Mammary epithelial cell (primary cell): ENCODE measurements at regions of chr16 and their contacts with region 1.

Region 1: GRCh38 chr16:56988948-56989945 is at the start of gene NLRC5:
- DNase-seq: peak; percentile 79
- H3K4me3 ChIP-seq: peak within 1 kb of the TSS; percentile 72 to 88 (median 75)
- H3K27ac ChIP-seq: peak within 1 kb of the TSS; percentile 21
- H3K4me1 ChIP-seq: peaks cover 27% of the 10 kb centered on the region
- H3K27me3 ChIP-seq: no peaks in the 10 kb centered on the region
- CTCF ChIP-seq: no peak
- total RNA-seq, gene NLRC5: 2.7 to 10.2 TPM

Region 2: DNA sequence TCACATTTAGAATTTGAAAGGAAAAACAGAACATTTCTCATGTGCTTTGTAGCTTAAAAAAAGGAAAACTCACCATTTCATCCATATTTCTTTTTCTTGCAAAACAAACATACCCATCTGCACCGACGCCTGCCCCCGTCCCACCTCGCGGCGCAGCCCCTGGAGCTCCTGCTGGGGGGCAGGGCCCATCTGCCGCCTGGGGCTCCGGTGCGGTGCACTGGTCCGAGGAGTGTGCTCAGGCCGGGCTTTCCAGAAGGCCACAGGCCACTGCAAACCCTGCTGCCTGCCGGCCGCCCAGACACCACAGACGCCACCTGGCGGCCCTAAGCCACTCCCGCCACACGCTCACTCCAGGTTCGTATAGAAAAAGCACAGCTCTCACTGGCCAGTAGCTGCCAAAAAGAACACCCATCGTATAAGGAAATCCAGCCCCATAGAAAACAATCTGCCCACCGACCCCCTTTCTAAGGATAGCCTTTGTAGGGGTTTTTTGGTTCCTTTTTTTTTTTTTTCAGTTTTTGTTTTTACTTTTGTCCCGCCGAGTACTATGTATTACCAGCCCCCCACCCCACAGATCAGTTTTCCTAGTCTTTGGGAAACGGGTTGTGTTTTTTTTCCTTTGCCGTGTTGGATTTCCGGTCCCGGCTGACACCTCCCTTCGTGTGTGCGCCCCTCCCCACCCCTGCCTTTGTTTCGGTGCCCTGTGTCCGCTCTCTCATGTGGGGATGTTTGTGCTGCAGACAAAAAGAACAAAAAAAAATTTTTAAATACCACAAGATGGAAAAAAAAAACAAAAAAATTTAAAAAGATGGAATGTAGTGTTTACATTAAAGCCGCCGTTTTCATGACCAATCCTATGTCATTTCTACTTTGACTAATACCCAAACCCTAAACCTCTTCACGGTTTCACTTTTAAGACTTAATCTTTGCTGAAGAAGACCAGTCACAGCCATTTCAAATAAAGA is 632.7 kb before region 1 on chr16:
- CTCF ChIA-PET with region 1: no interaction called
- dilution Hi-C with region 1: no loop called
- in situ Hi-C with region 1: no loop called
- intact Hi-C with region 1: loop called (anchors 5 kb)
- DNase-seq: peak; percentile 67
- H3K4me3 ChIP-seq: peak overlapping the region; percentile 34 to 68 (median 46)
- H3K27ac ChIP-seq: peak overlapping the region; percentile 26
- H3K4me1 ChIP-seq: peaks cover 11% of the 10 kb centered on the region
- H3K27me3 ChIP-seq: no peaks in the 10 kb centered on the region
- CTCF ChIP-seq: peak; percentile 84 to 96

Region 3: GRCh38 chr16:57920215-57920879 is 931.1 kb after region 1 on chr16:
- CTCF ChIA-PET with region 1: no interaction called
- dilution Hi-C with region 1: no loop called
- in situ Hi-C with region 1: no loop called
- intact Hi-C with region 1: no loop called
- DNase-seq: peak; percentile 70
- H3K4me3 ChIP-seq: no peak overlapping the region
- H3K27ac ChIP-seq: peak overlapping the region; percentile 69
- H3K4me1 ChIP-seq: peaks cover 31% of the 10 kb centered on the region
- H3K27me3 ChIP-seq: no peaks in the 10 kb centered on the region
- CTCF ChIP-seq: no peak